ENCODE measurements at regions of chr6 and their contacts with region 1.

Region 1: DNA sequence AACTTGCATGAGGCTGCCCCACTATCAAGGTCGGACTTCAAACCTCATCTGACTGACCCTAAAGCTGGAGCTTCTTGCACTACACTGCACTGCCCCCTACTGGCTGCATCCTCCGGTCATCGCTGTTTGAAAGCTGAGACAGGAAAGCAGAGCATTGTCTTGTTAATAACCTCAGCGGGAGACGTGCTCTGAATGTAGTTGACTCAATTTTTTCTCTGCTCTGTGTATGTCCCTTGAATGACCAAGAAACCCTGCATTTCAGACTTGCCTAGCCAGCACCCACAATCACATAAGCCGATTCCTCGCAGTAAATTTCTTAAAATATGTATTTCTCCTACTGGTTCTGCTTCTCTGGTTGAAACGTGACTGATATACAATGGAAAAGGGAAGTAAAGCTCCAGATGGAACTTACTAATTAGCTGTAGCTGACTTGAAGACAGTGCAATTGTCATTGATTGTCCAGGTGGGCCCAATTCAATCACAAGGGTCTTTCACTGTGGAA is 27.8 kb downstream of the TCF21 start:
- DNase-seq: peak; percentile 83
- H3K4me3 ChIP-seq: no peak overlapping the region
- H3K27ac ChIP-seq: no peak overlapping the region
- H3K4me1 ChIP-seq: no peaks in the 10 kb centered on the region
- H3K27me3 ChIP-seq: peaks cover 9 to 37% of the 10 kb centered on the region in 2 experiments
- CTCF ChIP-seq: peak; percentile 89 to 90
- POLR2A ChIP-seq: no peak

Region 2: GRCh38 chr6:132530293-132530974 is 1386.3 kb before region 1 on chr6:
- CTCF ChIA-PET with region 1: interaction called, 8 read pairs
- POLR2A ChIA-PET with region 1: no interaction called
- dilution Hi-C with region 1: no loop called
- intact Hi-C with region 1: loop called (anchors 5 kb)
- DNase-seq: peak; percentile 58
- H3K4me3 ChIP-seq: no peak overlapping the region
- H3K27ac ChIP-seq: no peak overlapping the region
- H3K4me1 ChIP-seq: no peaks in the 10 kb centered on the region
- H3K27me3 ChIP-seq: peaks cover 6 to 12% of the 10 kb centered on the region in 2 experiments
- CTCF ChIP-seq: peak; percentile 60 to 63
- POLR2A ChIP-seq: no peak

Region 3: DNA sequence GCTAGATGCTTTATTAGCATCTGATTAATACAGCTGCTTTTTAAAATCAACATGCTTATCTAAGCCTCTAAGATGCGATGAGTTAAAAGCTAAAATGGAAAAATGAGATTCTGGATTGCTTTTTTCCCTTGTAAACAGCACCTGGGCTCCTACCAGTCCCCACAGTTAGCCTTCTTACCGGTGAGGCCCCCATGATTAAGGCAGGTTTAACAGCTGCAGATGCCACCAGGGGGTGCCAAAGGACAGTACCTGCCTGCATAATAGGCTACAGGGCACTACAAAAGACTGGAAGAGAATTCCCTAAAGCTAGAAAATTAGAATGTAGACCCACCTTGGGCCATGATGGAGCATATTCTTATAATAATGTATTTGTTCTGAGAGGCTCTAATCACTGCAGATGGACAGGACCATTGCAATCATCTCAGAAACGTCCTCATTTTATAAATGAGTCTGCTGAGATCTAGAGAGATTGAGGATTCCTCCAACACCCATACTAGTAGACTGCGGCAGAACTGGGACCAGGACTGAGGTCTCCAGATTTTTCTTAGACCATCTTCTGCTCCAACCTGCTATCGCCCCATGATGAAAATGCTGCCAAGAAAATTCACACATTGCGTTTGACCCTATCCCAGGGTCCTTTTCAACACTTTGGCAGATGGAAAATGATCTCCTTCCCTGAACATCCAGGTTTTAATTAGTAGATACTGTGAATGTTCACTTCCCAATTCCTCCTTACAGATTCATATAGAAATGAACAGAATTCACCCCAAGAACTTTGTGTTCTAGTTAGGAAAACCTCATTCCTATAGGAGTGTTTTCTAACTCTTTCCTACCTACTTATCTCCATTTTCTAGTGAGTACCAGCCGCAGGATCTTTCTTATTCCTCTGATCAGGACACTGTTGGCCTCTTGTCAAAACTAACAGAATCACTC is 953.5 kb before region 1 on chr6:
- CTCF ChIA-PET with region 1: interaction called, 35 read pairs
- POLR2A ChIA-PET with region 1: no interaction called
- dilution Hi-C with region 1: no loop called
- intact Hi-C with region 1: loop called (anchors 5 kb)
- DNase-seq: peak; percentile 82
- H3K4me3 ChIP-seq: no peak overlapping the region
- H3K27ac ChIP-seq: no peak overlapping the region
- H3K4me1 ChIP-seq: peaks cover 20% of the 10 kb centered on the region
- H3K27me3 ChIP-seq: peaks cover 4 to 6% of the 10 kb centered on the region in 2 experiments
- CTCF ChIP-seq: peak; percentile 71 to 75
- POLR2A ChIP-seq: no peak

Region 4: GRCh38 chr6:133262804-133263203 is 653.9 kb before region 1 on chr6:
- CTCF ChIA-PET with region 1: no interaction called
- POLR2A ChIA-PET with region 1: no interaction called
- dilution Hi-C with region 1: no loop called
- intact Hi-C with region 1: no loop called
- DNase-seq: no peak
- H3K4me3 ChIP-seq: no peak overlapping the region
- H3K27ac ChIP-seq: no peak overlapping the region
- H3K4me1 ChIP-seq: no peaks in the 10 kb centered on the region
- H3K27me3 ChIP-seq: peaks cover 0 to 2% of the 10 kb centered on the region in 2 experiments
- CTCF ChIP-seq: no peak
- POLR2A ChIP-seq: no peak

Region 5: GRCh38 chr6:133341607-133342158 is 575.0 kb before region 1 on chr6:
- CTCF ChIA-PET with region 1: no interaction called
- POLR2A ChIA-PET with region 1: no interaction called
- dilution Hi-C with region 1: no loop called
- intact Hi-C with region 1: no loop called
- DNase-seq: peak; percentile 76
- H3K4me3 ChIP-seq: no peak overlapping the region
- H3K27ac ChIP-seq: no peak overlapping the region
- H3K4me1 ChIP-seq: no peaks in the 10 kb centered on the region
- H3K27me3 ChIP-seq: no peaks in the 10 kb centered on the region
- CTCF ChIP-seq: no peak
- POLR2A ChIP-seq: no peak

Region 6: GRCh38 chr6:133568970-133569889 is 347.5 kb before region 1 on chr6:
- CTCF ChIA-PET with region 1: interaction called, 298 read pairs
- POLR2A ChIA-PET with region 1: no interaction called
- dilution Hi-C with region 1: no loop called
- intact Hi-C with region 1: loop called (anchors 1 kb)
- DNase-seq: peak; percentile 56
- H3K4me3 ChIP-seq: peak overlapping the region in 2 of 3 experiments; percentile 29 to 49
- H3K27ac ChIP-seq: no peak overlapping the region
- H3K4me1 ChIP-seq: peaks cover 5% of the 10 kb centered on the region
- H3K27me3 ChIP-seq: peaks cover 3 to 6% of the 10 kb centered on the region in 2 experiments
- CTCF ChIP-seq: peak; percentile 67 to 74
- POLR2A ChIP-seq: no peak

Region 7: GRCh38 chr6:133787859-133788505 is 128.7 kb before region 1 on chr6:
- CTCF ChIA-PET with region 1: no interaction called
- POLR2A ChIA-PET with region 1: no interaction called
- dilution Hi-C with region 1: no loop called
- intact Hi-C with region 1: no loop called
- DNase-seq: no peak
- H3K4me3 ChIP-seq: no peak overlapping the region
- H3K27ac ChIP-seq: no peak overlapping the region
- H3K4me1 ChIP-seq: no peaks in the 10 kb centered on the region
- H3K27me3 ChIP-seq: no peaks in the 10 kb centered on the region
- CTCF ChIP-seq: no peak
- POLR2A ChIP-seq: no peak

Region 8: GRCh38 chr6:133888929-133889556 is 27.7 kb before region 1 on chr6 and contains the start of gene TCF21:
- CTCF ChIA-PET with region 1: interaction called, 11 read pairs
- POLR2A ChIA-PET with region 1: no interaction called
- dilution Hi-C with region 1: no loop called
- intact Hi-C with region 1: no loop called
- DNase-seq: no peak
- H3K4me3 ChIP-seq: no peak within 1 kb of the TSS
- H3K27ac ChIP-seq: no peak within 1 kb of the TSS
- H3K4me1 ChIP-seq: no peaks in the 10 kb centered on the region
- H3K27me3 ChIP-seq: peaks cover 60 to 91% of the 10 kb centered on the region in 2 experiments
- CTCF ChIP-seq: no peak
- POLR2A ChIP-seq: no peak
- total RNA-seq, gene TCF21: not detected in 2 replicates

Region 9: GRCh38 chr6:133906050-133906449 is 10.7 kb before region 1 on chr6:
- CTCF ChIA-PET with region 1: interaction called, 28 read pairs
- POLR2A ChIA-PET with region 1: no interaction called
- dilution Hi-C with region 1: no loop called
- intact Hi-C with region 1: no loop called
- DNase-seq: no peak
- H3K4me3 ChIP-seq: no peak overlapping the region
- H3K27ac ChIP-seq: no peak overlapping the region
- H3K4me1 ChIP-seq: no peaks in the 10 kb centered on the region
- H3K27me3 ChIP-seq: peaks cover 17 to 31% of the 10 kb centered on the region in 2 experiments
- CTCF ChIP-seq: no peak
- POLR2A ChIP-seq: no peak

Region 10: DNA sequence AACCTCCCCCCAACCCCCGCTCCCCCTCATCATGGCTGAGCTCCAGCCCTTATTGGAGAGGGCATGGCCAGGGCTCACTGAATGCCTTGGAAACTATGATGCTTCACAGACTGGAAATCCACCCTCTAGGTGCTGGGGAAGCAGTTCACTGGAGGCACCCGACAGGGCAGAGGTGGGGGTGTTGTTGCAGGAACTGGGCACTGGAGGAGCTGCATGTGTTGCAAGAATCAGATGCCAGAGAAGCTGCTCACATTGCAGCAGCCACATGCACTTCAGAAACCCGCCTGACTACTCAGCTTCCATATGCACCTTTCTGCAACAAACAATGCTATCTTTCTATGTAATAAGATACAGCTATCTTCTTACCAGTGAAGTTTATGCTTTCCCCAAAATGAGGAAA is 28.5 kb after region 1 on chr6:
- CTCF ChIA-PET with region 1: interaction called, 19 read pairs
- POLR2A ChIA-PET with region 1: no interaction called
- dilution Hi-C with region 1: no loop called
- intact Hi-C with region 1: no loop called
- DNase-seq: no peak
- H3K4me3 ChIP-seq: no peak overlapping the region
- H3K27ac ChIP-seq: no peak overlapping the region
- H3K4me1 ChIP-seq: no peaks in the 10 kb centered on the region
- H3K27me3 ChIP-seq: peaks cover 19 to 20% of the 10 kb centered on the region in 2 experiments
- CTCF ChIP-seq: no peak
- POLR2A ChIP-seq: no peak

Region 11: DNA sequence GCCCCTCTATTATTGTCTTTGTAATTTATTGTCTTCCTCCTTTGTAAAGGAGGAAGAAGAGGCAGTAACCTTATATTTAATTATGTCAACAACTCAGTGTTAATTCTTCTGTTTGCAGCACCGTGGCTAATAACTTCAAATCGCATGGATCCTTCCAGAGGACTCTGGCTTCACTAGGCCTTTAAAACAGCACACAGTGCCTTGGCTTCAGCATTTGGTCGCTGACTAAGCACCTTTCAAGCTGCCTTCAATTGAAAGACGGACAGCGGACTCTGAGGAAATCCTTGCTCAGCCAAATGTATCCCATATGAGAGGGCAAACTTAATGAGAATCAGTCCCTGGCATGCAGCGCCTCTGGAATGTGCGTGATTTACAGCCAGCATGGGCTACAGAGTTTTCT is 337.0 kb after region 1 on chr6:
- CTCF ChIA-PET with region 1: no interaction called
- POLR2A ChIA-PET with region 1: no interaction called
- dilution Hi-C with region 1: no loop called
- intact Hi-C with region 1: no loop called
- DNase-seq: no peak
- H3K4me3 ChIP-seq: no peak overlapping the region
- H3K27ac ChIP-seq: no peak overlapping the region
- H3K4me1 ChIP-seq: no peaks in the 10 kb centered on the region
- H3K27me3 ChIP-seq: no peaks in the 10 kb centered on the region
- CTCF ChIP-seq: no peak
- POLR2A ChIP-seq: no peak